Mammary epithelial cell (primary cell): ENCODE measurements at regions of chr5 and their contacts with region 1.

Region 1: GRCh38 chr5:79020861-79021561 is 35.9 kb upstream of the ARSB start:
- DNase-seq: peak; percentile 39
- H3K4me3 ChIP-seq: peak overlapping the region in 2 of 3 experiments; percentile 22 to 31
- H3K27ac ChIP-seq: no peak overlapping the region
- H3K4me1 ChIP-seq: peaks cover 15% of the 10 kb centered on the region
- H3K27me3 ChIP-seq: peaks cover 4% of the 10 kb centered on the region
- CTCF ChIP-seq: peak; percentile 86 to 88

Region 2: DNA sequence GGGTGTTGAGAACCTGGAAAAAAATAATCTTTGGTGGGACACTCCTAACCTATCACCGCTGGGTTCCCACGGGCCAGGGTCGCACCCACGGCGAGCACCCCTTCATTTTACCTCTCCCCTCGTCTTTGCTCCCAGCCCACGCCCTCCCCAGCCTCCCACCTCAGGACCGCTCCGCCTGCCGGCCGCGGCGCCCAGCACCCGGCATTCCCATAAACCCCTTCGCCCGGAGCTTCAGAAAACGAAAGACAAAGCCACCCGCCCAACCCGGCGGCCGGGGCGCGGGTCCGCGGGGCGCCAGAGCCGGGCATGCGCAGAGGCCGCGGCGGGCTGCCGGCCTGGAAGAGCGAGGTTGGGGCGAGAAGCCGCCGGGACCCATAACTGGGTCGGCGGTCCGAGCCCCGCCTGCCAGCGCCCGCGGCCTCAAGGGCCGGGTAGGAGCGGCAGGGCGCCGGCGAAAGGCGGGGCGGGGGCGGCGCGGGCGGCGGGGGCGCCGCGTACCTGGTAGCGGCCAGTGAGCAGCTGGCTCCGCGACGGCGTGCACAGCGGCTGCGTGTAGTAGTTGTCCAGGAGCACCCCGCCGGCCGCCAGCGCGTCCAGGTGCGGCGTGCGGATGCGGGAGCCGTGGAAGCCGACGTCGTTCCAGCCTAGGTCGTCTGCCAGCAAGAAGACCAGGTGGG is 36.4 kb before region 1 on chr5:
- CTCF ChIA-PET with region 1: no interaction called
- dilution Hi-C with region 1: no loop called
- in situ Hi-C with region 1: no loop called
- intact Hi-C with region 1: loop called (anchors 5 kb)
- DNase-seq: peak; percentile 82
- H3K4me3 ChIP-seq: peak overlapping the region; percentile 66 to 79 (median 67)
- H3K27ac ChIP-seq: peak overlapping the region; percentile 44
- H3K4me1 ChIP-seq: peaks cover 26% of the 10 kb centered on the region
- H3K27me3 ChIP-seq: no peaks in the 10 kb centered on the region
- CTCF ChIP-seq: peak; percentile 4 to 52

Region 3: GRCh38 chr5:79464695-79465332 is 443.8 kb after region 1 on chr5:
- CTCF ChIA-PET with region 1: no interaction called
- dilution Hi-C with region 1: no loop called
- in situ Hi-C with region 1: loop called (anchors 10 kb)
- intact Hi-C with region 1: loop called (anchors 1 kb)
- DNase-seq: peak; percentile 2
- H3K4me3 ChIP-seq: no peak overlapping the region
- H3K27ac ChIP-seq: no peak overlapping the region
- H3K4me1 ChIP-seq: no peaks in the 10 kb centered on the region
- H3K27me3 ChIP-seq: no peaks in the 10 kb centered on the region
- CTCF ChIP-seq: peak; percentile 51 to 66

Region 4: GRCh38 chr5:79514391-79515105 is 493.5 kb after region 1 on chr5:
- CTCF ChIA-PET with region 1: interaction called, 4 read pairs
- dilution Hi-C with region 1: no loop called
- in situ Hi-C with region 1: no loop called
- intact Hi-C with region 1: loop called (anchors 5 kb)
- DNase-seq: peak; percentile 95
- H3K4me3 ChIP-seq: peak overlapping the region; percentile 73 to 77 (median 74)
- H3K27ac ChIP-seq: peak overlapping the region; percentile 85
- H3K4me1 ChIP-seq: peaks cover 15% of the 10 kb centered on the region
- H3K27me3 ChIP-seq: no peaks in the 10 kb centered on the region
- CTCF ChIP-seq: no peak

Region 5: GRCh38 chr5:79857714-79858409 is 836.9 kb after region 1 on chr5:
- CTCF ChIA-PET with region 1: no interaction called
- dilution Hi-C with region 1: no loop called
- in situ Hi-C with region 1: no loop called
- intact Hi-C with region 1: loop called (anchors 1 kb)
- DNase-seq: peak; percentile 45
- H3K4me3 ChIP-seq: no peak overlapping the region
- H3K27ac ChIP-seq: no peak overlapping the region
- H3K4me1 ChIP-seq: peaks cover 7% of the 10 kb centered on the region
- H3K27me3 ChIP-seq: peaks cover 3% of the 10 kb centered on the region
- CTCF ChIP-seq: peak; percentile 93 to 97